ENCODE measurements at regions of chr3 and their contacts with region 1.

Region 1: GRCh38 chr3:69686056-69686455 is 53.2 kb upstream of the MITF start:
- DNase-seq: no peak
- H3K4me3 ChIP-seq: no peak overlapping the region
- H3K27ac ChIP-seq: peak overlapping the region; percentile 86 to 94
- H3K4me1 ChIP-seq: peaks cover 6 to 12% of the 10 kb centered on the region in 2 donors
- H3K27me3 ChIP-seq: no peaks in the 10 kb centered on the region
- CTCF ChIP-seq: no peak
- POLR2A ChIP-seq: no peak

Region 2: DNA sequence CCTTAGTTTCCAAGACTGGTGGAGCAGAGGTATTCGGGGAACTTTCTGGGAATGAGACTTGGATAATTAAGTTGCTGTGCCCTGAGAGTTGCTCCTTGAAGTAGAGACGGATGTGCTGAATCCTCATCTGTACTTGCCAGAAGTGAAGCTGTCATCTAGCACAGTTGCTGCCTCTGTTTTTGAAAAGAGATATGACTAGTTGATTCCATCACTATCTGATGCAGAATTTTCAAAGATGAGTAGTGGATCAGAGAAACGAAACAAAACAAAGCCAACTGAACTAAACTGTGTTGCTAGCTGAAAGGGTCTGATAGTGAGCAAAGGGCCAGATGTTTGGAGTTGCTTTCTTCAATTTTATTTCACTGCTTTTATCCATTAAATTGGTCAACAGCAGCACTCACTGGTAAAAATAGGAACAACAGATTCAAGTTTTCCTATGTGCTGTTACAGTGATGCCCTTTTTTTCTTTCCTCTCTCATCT is 105.9 kb after region 1 on chr3:
- intact Hi-C with region 1: loop called (anchors 5 kb)
- DNase-seq: no peak
- H3K4me3 ChIP-seq: no peak overlapping the region
- H3K27ac ChIP-seq: peak overlapping the region; percentile 67 to 85
- H3K4me1 ChIP-seq: peaks cover 0 to 12% of the 10 kb centered on the region in 2 donors
- H3K27me3 ChIP-seq: no peaks in the 10 kb centered on the region
- CTCF ChIP-seq: peak; percentile 46 to 84 (median 65)
- POLR2A ChIP-seq: no peak

Region 3: GRCh38 chr3:69994919-69995318 is 308.9 kb after region 1 on chr3:
- intact Hi-C with region 1: no loop called
- DNase-seq: no peak
- H3K4me3 ChIP-seq: no peak overlapping the region
- H3K27ac ChIP-seq: no peak overlapping the region
- H3K4me1 ChIP-seq: no peaks in the 10 kb centered on the region
- H3K27me3 ChIP-seq: no peaks in the 10 kb centered on the region
- CTCF ChIP-seq: no peak
- POLR2A ChIP-seq: no peak